Psoas muscle (tissue), 8 donors: ENCODE measurements at regions of chr11 and their contacts with region 1.

Region 1: GRCh38 chr11:65425105-65425970 is 2.7 kb downstream of the NEAT1 start:
- DNase-seq: no peak
- ATAC-seq: no peak
- H3K4me3 ChIP-seq: peak overlapping the region; percentile 86
- H3K27ac ChIP-seq: peak overlapping the region; percentile 100
- H3K4me1 ChIP-seq: peaks cover 17% of the 10 kb centered on the region
- H3K27me3 ChIP-seq: no peaks in the 10 kb centered on the region
- CTCF ChIP-seq: peak; percentile 6

Region 2: DNA sequence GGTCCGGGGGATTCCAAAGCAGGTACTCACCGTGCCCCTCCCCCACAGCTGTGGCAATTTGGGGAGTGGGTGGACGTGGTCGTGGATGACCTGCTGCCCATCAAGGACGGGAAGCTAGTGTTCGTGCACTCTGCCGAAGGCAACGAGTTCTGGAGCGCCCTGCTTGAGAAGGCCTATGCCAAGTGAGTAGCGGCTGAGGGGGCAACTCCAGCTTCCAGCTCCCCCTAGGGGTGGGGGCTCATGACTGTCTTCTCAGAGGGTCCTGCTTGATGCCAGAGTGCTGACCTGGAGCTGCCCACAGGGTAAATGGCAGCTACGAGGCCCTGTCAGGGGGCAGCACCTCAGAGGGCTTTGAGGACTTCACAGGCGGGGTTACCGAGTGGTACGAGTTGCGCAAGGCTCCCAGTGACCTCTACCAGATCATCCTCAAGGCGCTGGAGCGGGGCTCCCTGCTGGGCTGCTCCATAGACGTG is 239.4 kb before region 1 on chr11:
- intact Hi-C with region 1: no loop called
- DNase-seq: no peak
- ATAC-seq: no peak
- H3K4me3 ChIP-seq: no peak overlapping the region
- H3K27ac ChIP-seq: no peak overlapping the region
- H3K4me1 ChIP-seq: no peaks in the 10 kb centered on the region
- H3K27me3 ChIP-seq: no peaks in the 10 kb centered on the region
- CTCF ChIP-seq: no peak

Region 3: GRCh38 chr11:65437436-65438227 is 12.3 kb after region 1 on chr11:
- intact Hi-C with region 1: loop called in 1 of 2 experiments (anchors 1 kb)
- DNase-seq: peak in 1 of 2 donors; percentile 56
- ATAC-seq: peak in 3 of 4 donors; percentile 1 to 3 (median 2)
- H3K4me3 ChIP-seq: peak overlapping the region; percentile 86
- H3K27ac ChIP-seq: peak overlapping the region; percentile 100
- H3K4me1 ChIP-seq: peaks cover 58% of the 10 kb centered on the region
- H3K27me3 ChIP-seq: no peaks in the 10 kb centered on the region
- CTCF ChIP-seq: no peak